B cell (primary cell): ENCODE measurements at regions of chr10 and their contacts with region 1.

Region 1: GRCh38 chr10:89793649-89794254 is 92.4 kb downstream of the KIF20B start:
- DNase-seq: peak; percentile 80
- ATAC-seq: peak; percentile 61
- H3K4me3 ChIP-seq: no peak overlapping the region
- H3K4me3 Mint-ChIP-seq: no peak overlapping the region
- H3K27ac ChIP-seq: no peak overlapping the region
- H3K27ac Mint-ChIP-seq: no peak overlapping the region
- H3K4me1 ChIP-seq: peaks cover 0 to 4% of the 10 kb centered on the region in 2 donors
- H3K4me1 Mint-ChIP-seq: peaks cover 5% of the 10 kb centered on the region
- H3K27me3 ChIP-seq: peaks cover 0 to 2% (median 0%) of the 10 kb centered on the region in 4 experiments
- H3K27me3 Mint-ChIP-seq: peaks cover 4% of the 10 kb centered on the region
- CTCF ChIP-seq: peak; percentile 97

Region 2: DNA sequence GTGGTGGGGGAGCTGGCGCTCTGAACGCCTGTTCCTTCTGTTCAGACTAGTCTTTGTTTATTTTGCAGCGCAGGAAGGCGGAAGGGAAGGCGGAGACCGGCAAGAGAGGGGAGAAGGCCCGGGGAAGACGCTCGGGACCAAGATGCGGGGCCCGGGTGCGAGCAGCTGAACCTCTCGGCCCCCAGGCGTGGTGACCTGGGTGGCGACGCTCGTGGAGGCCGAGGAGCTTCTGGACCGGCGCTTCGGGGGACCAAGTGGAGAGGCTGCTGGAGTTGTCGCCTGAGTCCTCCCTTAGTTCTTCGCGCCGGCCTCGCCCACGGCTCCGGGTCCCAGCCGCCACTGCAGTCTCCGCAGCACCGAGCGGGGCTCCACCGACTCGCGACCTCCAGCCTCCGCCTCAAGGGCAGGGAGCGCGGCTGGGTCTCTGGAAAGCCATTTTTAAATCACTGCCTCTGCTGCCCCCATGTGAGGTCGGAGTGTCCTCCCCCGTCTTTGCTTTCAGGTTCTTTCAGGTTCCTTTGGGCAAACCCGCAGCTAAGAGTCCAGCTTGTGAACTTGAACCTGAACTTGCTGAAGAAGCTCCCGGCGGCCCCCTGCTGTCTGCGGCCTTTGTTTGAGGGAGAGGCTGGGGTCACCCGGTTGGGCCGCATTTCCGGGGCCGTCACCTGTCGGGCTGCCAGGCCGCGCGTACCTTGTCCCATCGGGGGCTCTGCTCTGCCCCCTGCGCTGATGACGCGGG is 43.6 kb after region 1 on chr10:
- CTCF ChIA-PET with region 1: no interaction called
- POLR2A ChIA-PET with region 1: no interaction called
- intact Hi-C with region 1: no loop called
- DNase-seq: peak; percentile 70
- ATAC-seq: peak; percentile 76
- H3K4me3 ChIP-seq: peak overlapping the region; percentile 42 to 87 (median 75)
- H3K4me3 Mint-ChIP-seq: peak overlapping the region; percentile 84
- H3K27ac ChIP-seq: peak overlapping the region; percentile 56 to 74
- H3K27ac Mint-ChIP-seq: peak overlapping the region; percentile 87
- H3K4me1 ChIP-seq: peaks cover 9 to 18% of the 10 kb centered on the region in 2 donors
- H3K4me1 Mint-ChIP-seq: peaks cover 22% of the 10 kb centered on the region
- H3K27me3 ChIP-seq: no peaks in the 10 kb centered on the region
- H3K27me3 Mint-ChIP-seq: peaks cover 10% of the 10 kb centered on the region
- CTCF ChIP-seq: no peak

Region 3: DNA sequence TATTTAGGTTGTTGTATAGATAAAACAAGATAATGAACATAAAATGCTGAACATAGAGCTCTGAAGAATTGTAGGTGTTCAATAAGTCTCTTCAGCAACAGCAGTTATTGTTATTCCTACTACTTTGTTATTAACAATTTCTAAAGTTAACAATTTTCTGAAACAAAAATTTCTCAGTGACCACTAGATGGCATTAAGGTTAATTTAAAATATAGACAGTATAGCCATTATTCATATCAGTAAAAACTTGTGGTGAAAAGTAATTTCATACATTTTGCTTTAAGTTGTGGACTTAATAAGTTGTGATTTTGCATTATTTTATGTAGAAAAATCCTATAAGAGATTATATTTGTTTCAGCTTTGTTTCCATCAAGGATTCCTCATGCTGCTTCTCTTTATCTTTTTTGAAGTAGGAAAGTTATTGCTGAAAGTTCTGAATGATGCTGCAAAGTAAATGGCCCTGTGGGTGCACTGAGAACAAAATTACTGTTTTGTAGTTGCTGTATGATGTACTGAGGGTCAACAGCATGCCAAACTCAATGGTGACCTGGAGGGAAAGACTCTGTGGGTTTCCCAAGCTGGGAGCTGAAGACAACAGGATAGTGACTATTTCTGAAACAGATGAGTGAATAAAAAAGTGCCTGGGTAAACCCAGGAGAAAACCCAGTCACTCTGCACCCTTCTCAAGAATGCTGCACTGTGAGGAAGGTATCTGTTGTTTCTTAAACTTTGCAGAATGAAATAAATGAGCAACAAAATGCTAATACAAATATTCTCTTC is 161.2 kb after region 1 on chr10:
- CTCF ChIA-PET with region 1: interaction called, 5 read pairs
- POLR2A ChIA-PET with region 1: no interaction called
- intact Hi-C with region 1: loop called (anchors 1 kb)
- DNase-seq: peak; percentile 21
- ATAC-seq: no peak
- H3K4me3 ChIP-seq: no peak overlapping the region
- H3K4me3 Mint-ChIP-seq: no peak overlapping the region
- H3K27ac ChIP-seq: no peak overlapping the region
- H3K27ac Mint-ChIP-seq: no peak overlapping the region
- H3K4me1 ChIP-seq: peaks cover 0 to 8% of the 10 kb centered on the region in 2 donors
- H3K4me1 Mint-ChIP-seq: peaks cover 12% of the 10 kb centered on the region
- H3K27me3 ChIP-seq: no peaks in the 10 kb centered on the region
- H3K27me3 Mint-ChIP-seq: no peaks in the 10 kb centered on the region
- CTCF ChIP-seq: peak; percentile 68

Region 4: GRCh38 chr10:90138844-90139243 is 345.1 kb after region 1 on chr10:
- CTCF ChIA-PET with region 1: interaction called, 4 read pairs
- POLR2A ChIA-PET with region 1: no interaction called
- intact Hi-C with region 1: loop called (anchors 1 kb)
- DNase-seq: peak; percentile 40
- ATAC-seq: no peak
- H3K4me3 ChIP-seq: no peak overlapping the region
- H3K4me3 Mint-ChIP-seq: no peak overlapping the region
- H3K27ac ChIP-seq: no peak overlapping the region
- H3K27ac Mint-ChIP-seq: no peak overlapping the region
- H3K4me1 ChIP-seq: no peaks in the 10 kb centered on the region
- H3K4me1 Mint-ChIP-seq: no peaks in the 10 kb centered on the region
- H3K27me3 ChIP-seq: no peaks in the 10 kb centered on the region
- H3K27me3 Mint-ChIP-seq: no peaks in the 10 kb centered on the region
- CTCF ChIP-seq: peak; percentile 45

Region 5: GRCh38 chr10:90592638-90593302 is 799.0 kb after region 1 on chr10:
- CTCF ChIA-PET with region 1: interaction called, 16 read pairs
- POLR2A ChIA-PET with region 1: no interaction called
- intact Hi-C with region 1: no loop called
- DNase-seq: peak; percentile 37
- ATAC-seq: peak; percentile 39
- H3K4me3 ChIP-seq: no peak overlapping the region
- H3K4me3 Mint-ChIP-seq: no peak overlapping the region
- H3K27ac ChIP-seq: no peak overlapping the region
- H3K27ac Mint-ChIP-seq: no peak overlapping the region
- H3K4me1 ChIP-seq: peaks cover 0 to 2% of the 10 kb centered on the region in 2 donors
- H3K4me1 Mint-ChIP-seq: no peaks in the 10 kb centered on the region
- H3K27me3 ChIP-seq: no peaks in the 10 kb centered on the region
- H3K27me3 Mint-ChIP-seq: peaks cover 15% of the 10 kb centered on the region
- CTCF ChIP-seq: no peak

Region 6: DNA sequence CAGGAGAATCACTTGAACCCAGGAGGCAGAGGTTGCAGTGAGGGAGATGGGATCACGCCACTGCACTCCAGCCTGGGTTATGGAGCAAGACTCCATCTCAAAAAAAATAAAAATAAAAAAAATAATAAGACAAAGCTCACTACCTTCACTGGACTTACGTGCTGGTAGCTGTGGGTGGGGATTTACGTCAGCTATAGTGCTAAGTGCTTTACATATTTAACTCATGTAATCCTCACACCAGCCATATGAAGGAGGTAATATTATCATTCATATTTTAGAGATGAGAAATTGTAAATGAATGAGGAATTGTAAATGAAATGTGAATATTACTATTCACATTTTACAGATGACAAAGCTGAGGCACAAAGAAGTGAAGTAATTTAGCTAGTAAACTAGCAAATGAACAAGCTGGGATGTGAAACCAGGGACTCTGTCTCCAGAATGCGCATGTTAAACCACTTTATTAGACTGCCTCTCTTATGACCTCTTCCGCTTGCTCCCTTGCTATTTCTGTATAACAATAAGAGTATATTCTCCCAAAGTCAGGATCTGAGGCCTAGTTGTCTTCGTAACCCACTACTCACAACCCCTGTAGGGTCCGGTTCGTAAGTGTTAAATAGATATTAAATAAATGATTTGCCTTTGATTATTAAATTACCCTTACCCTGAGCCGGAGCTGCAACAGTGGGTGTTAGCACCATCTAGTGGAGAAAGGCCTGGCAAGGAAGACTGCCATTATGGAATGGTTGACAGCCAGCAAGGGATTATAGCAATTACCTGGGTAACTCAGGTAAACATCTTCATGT is 993.8 kb after region 1 on chr10:
- CTCF ChIA-PET with region 1: interaction called, 13 read pairs
- POLR2A ChIA-PET with region 1: no interaction called
- intact Hi-C with region 1: no loop called
- DNase-seq: peak; percentile 23
- ATAC-seq: no peak
- H3K4me3 ChIP-seq: no peak overlapping the region
- H3K4me3 Mint-ChIP-seq: no peak overlapping the region
- H3K27ac ChIP-seq: no peak overlapping the region
- H3K27ac Mint-ChIP-seq: no peak overlapping the region
- H3K4me1 ChIP-seq: peaks cover 3 to 6% of the 10 kb centered on the region in 2 donors
- H3K4me1 Mint-ChIP-seq: peaks cover 13% of the 10 kb centered on the region
- H3K27me3 ChIP-seq: no peaks in the 10 kb centered on the region
- H3K27me3 Mint-ChIP-seq: peaks cover 12% of the 10 kb centered on the region
- CTCF ChIP-seq: no peak

Region 7: GRCh38 chr10:90862908-90863514 is 1069.3 kb after region 1 on chr10:
- CTCF ChIA-PET with region 1: interaction called, 36 read pairs
- POLR2A ChIA-PET with region 1: no interaction called
- intact Hi-C with region 1: loop called (anchors 1 kb)
- DNase-seq: peak; percentile 36
- ATAC-seq: no peak
- H3K4me3 ChIP-seq: no peak overlapping the region
- H3K4me3 Mint-ChIP-seq: no peak overlapping the region
- H3K27ac ChIP-seq: no peak overlapping the region
- H3K27ac Mint-ChIP-seq: no peak overlapping the region
- H3K4me1 ChIP-seq: peaks cover 4 to 5% of the 10 kb centered on the region in 2 donors
- H3K4me1 Mint-ChIP-seq: peaks cover 4% of the 10 kb centered on the region
- H3K27me3 ChIP-seq: peaks cover 0 to 17% (median 10%) of the 10 kb centered on the region in 4 experiments
- H3K27me3 Mint-ChIP-seq: peaks cover 35% of the 10 kb centered on the region
- CTCF ChIP-seq: peak; percentile 86